ENCODE measurements at regions of chr1 and their contacts with region 1.

Region 1: GRCh38 chr1:244451951-244452795 is 464 bp upstream of the ADSS2 start:
- DNase-seq: peak; percentile 100
- ATAC-seq: peak; percentile 92
- H3K4me3 ChIP-seq: peak overlapping the region in 4 of 5 experiments; percentile 88 to 98 (median 93)
- H3K4me3 Mint-ChIP-seq: peak overlapping the region; percentile 95
- H3K27ac ChIP-seq: peak overlapping the region; percentile 92 to 94
- H3K27ac Mint-ChIP-seq: peak overlapping the region; percentile 94
- H3K4me1 ChIP-seq: peaks cover 17 to 18% of the 10 kb centered on the region in 2 donors
- H3K4me1 Mint-ChIP-seq: peaks cover 35% of the 10 kb centered on the region
- H3K27me3 ChIP-seq: no peaks in the 10 kb centered on the region
- H3K27me3 Mint-ChIP-seq: no peaks in the 10 kb centered on the region
- CTCF ChIP-seq: peak; percentile 47

Region 2: GRCh38 chr1:244304156-244305055 is 147.8 kb before region 1 on chr1:
- CTCF ChIA-PET with region 1: no interaction called
- POLR2A ChIA-PET with region 1: no interaction called
- intact Hi-C with region 1: no loop called
- DNase-seq: no peak
- ATAC-seq: no peak
- H3K4me3 ChIP-seq: no peak overlapping the region
- H3K4me3 Mint-ChIP-seq: no peak overlapping the region
- H3K27ac ChIP-seq: no peak overlapping the region
- H3K27ac Mint-ChIP-seq: no peak overlapping the region
- H3K4me1 ChIP-seq: peaks cover 0 to 8% of the 10 kb centered on the region in 2 donors
- H3K4me1 Mint-ChIP-seq: peaks cover 5% of the 10 kb centered on the region
- H3K27me3 ChIP-seq: no peaks in the 10 kb centered on the region
- H3K27me3 Mint-ChIP-seq: no peaks in the 10 kb centered on the region
- CTCF ChIP-seq: no peak

Region 3: GRCh38 chr1:244319283-244320132 is 132.7 kb before region 1 on chr1:
- CTCF ChIA-PET with region 1: no interaction called
- POLR2A ChIA-PET with region 1: no interaction called
- intact Hi-C with region 1: loop called (anchors 5 kb)
- DNase-seq: peak; percentile 63
- ATAC-seq: peak; percentile 82
- H3K4me3 ChIP-seq: peak overlapping the region in 2 of 5 experiments; percentile 2 to 28
- H3K4me3 Mint-ChIP-seq: peak overlapping the region; percentile 47
- H3K27ac ChIP-seq: peak overlapping the region; percentile 60 to 66
- H3K27ac Mint-ChIP-seq: peak overlapping the region; percentile 89
- H3K4me1 ChIP-seq: peaks cover 15% of the 10 kb centered on the region in 2 donors
- H3K4me1 Mint-ChIP-seq: peaks cover 41% of the 10 kb centered on the region
- H3K27me3 ChIP-seq: no peaks in the 10 kb centered on the region
- H3K27me3 Mint-ChIP-seq: no peaks in the 10 kb centered on the region
- CTCF ChIP-seq: no peak

Region 4: GRCh38 chr1:244435562-244436205 is 16.5 kb before region 1 on chr1:
- CTCF ChIA-PET with region 1: no interaction called
- POLR2A ChIA-PET with region 1: no interaction called
- intact Hi-C with region 1: no loop called
- DNase-seq: no peak
- ATAC-seq: no peak
- H3K4me3 ChIP-seq: no peak overlapping the region
- H3K4me3 Mint-ChIP-seq: no peak overlapping the region
- H3K27ac ChIP-seq: no peak overlapping the region
- H3K27ac Mint-ChIP-seq: no peak overlapping the region
- H3K4me1 ChIP-seq: no peaks in the 10 kb centered on the region
- H3K4me1 Mint-ChIP-seq: peaks cover 4% of the 10 kb centered on the region
- H3K27me3 ChIP-seq: no peaks in the 10 kb centered on the region
- H3K27me3 Mint-ChIP-seq: no peaks in the 10 kb centered on the region
- CTCF ChIP-seq: no peak